HEK293 (cell line): ENCODE measurements at regions of chr1 and their contacts with region 1.

Region 1: GRCh38 chr1:228165372-228166169 is at the start of gene IBA57:
- H3K4me3 ChIP-seq: peak within 1 kb of the TSS; percentile 62
- H3K27ac ChIP-seq: peak within 1 kb of the TSS; percentile 96
- H3K4me1 ChIP-seq: peaks cover 4% of the 10 kb centered on the region
- CTCF ChIP-seq: peak; percentile 99

Region 2: GRCh38 chr1:228082135-228082891 is 83.3 kb before region 1 on chr1 and contains the start of gene ARF1:
- CTCF ChIA-PET with region 1: interaction called, 3 read pairs
- POLR2A ChIA-PET with region 1: interaction called, 18 read pairs
- H3K4me3 ChIP-seq: peak within 1 kb of the TSS; percentile 76
- H3K27ac ChIP-seq: peak within 1 kb of the TSS; percentile 93
- H3K4me1 ChIP-seq: peaks cover 26% of the 10 kb centered on the region
- CTCF ChIP-seq: peak; percentile 52

Region 3: GRCh38 chr1:228131766-228132165 is 33.8 kb before region 1 on chr1:
- CTCF ChIA-PET with region 1: interaction called, 50 read pairs
- POLR2A ChIA-PET with region 1: interaction called, 9 read pairs
- H3K4me3 ChIP-seq: no peak overlapping the region
- H3K27ac ChIP-seq: no peak overlapping the region
- H3K4me1 ChIP-seq: no peaks in the 10 kb centered on the region
- CTCF ChIP-seq: no peak

Region 4: GRCh38 chr1:228139944-228140656 is 25.5 kb before region 1 on chr1 and contains the start of gene GUK1:
- CTCF ChIA-PET with region 1: interaction called, 23 read pairs
- POLR2A ChIA-PET with region 1: interaction called, 38 read pairs
- H3K4me3 ChIP-seq: peak within 1 kb of the TSS; percentile 90
- H3K27ac ChIP-seq: peak within 1 kb of the TSS; percentile 75
- H3K4me1 ChIP-seq: peaks cover 13% of the 10 kb centered on the region
- CTCF ChIP-seq: peak; percentile 100

Region 5: GRCh38 chr1:228150461-228151179 is 15.0 kb before region 1 on chr1:
- CTCF ChIA-PET with region 1: interaction called, 14 read pairs
- POLR2A ChIA-PET with region 1: interaction called, 82 read pairs
- H3K4me3 ChIP-seq: no peak overlapping the region
- H3K27ac ChIP-seq: no peak overlapping the region
- H3K4me1 ChIP-seq: peaks cover 3% of the 10 kb centered on the region; the same call in 1 of the 2 replicates
- CTCF ChIP-seq: no peak

Region 6: DNA sequence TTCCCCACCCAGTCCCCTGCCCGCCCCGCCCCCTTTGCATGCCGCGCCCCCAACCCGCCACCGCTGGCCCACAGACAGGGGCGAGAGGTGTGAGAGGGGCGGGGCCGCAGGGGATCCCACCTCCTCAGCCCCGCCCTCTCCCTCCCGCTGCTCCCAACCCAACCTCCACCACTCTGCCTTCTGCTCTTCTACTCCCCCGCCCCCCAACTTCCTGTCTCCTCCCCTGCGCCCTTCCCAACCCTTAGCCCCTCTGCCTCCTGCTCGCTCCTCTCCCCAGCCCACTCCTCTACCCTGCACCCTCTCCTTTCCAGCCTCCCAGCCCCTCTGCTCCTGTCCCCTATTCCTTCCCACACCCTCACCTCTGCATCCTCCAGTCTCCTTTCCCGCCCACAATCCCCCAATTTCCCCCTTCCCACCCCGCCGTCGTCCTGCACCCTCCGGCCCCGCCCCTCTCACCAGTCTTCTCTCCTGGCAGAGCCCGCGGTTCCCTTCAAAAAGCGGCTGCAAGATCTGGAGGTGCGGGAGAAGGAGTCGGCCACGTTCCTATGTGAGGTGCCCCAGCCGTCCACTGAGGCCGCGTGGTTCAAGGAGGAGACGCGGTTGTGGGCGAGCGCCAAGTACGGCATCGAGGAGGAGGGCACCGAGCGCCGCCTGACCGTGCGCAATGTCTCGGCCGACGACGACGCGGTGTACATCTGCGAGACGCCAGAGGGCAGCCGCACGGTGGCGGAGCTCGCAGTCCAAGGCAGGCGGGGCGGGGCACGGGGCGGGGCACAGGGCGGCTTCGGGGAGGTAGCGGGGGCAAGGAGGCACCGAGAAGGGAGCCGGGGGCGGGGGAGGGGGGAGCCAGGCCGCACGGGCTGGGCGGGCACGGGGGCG is 47.6 kb after region 1 on chr1:
- CTCF ChIA-PET with region 1: interaction called, 7 read pairs
- POLR2A ChIA-PET with region 1: interaction called, 17 read pairs
- H3K4me3 ChIP-seq: peak overlapping the region; percentile 67
- H3K27ac ChIP-seq: peak overlapping the region; percentile 71
- H3K4me1 ChIP-seq: no peaks in the 10 kb centered on the region; the same call in 1 of the 2 replicates
- CTCF ChIP-seq: peak; percentile 96

Region 7: GRCh38 chr1:228224198-228225164 is 58.9 kb after region 1 on chr1:
- CTCF ChIA-PET with region 1: no interaction called
- POLR2A ChIA-PET with region 1: no interaction called
- H3K4me3 ChIP-seq: no peak overlapping the region
- H3K27ac ChIP-seq: no peak overlapping the region
- H3K4me1 ChIP-seq: no peaks in the 10 kb centered on the region
- CTCF ChIP-seq: no peak

Region 8: GRCh38 chr1:228405987-228406265 is 240.4 kb after region 1 on chr1:
- CTCF ChIA-PET with region 1: no interaction called
- POLR2A ChIA-PET with region 1: interaction called, 12 read pairs
- H3K4me3 ChIP-seq: peak overlapping the region; percentile 59
- H3K27ac ChIP-seq: peak overlapping the region; percentile 88
- H3K4me1 ChIP-seq: peaks cover 11% of the 10 kb centered on the region
- CTCF ChIP-seq: no peak

Region 9: GRCh38 chr1:228420963-228421826 is 255.6 kb after region 1 on chr1:
- CTCF ChIA-PET with region 1: no interaction called
- POLR2A ChIA-PET with region 1: no interaction called
- H3K4me3 ChIP-seq: no peak overlapping the region
- H3K27ac ChIP-seq: no peak overlapping the region
- H3K4me1 ChIP-seq: no peaks in the 10 kb centered on the region
- CTCF ChIP-seq: no peak